PC-9 (cell line): ENCODE measurements at regions of chr5 and their contacts with region 1.

Region 1: DNA sequence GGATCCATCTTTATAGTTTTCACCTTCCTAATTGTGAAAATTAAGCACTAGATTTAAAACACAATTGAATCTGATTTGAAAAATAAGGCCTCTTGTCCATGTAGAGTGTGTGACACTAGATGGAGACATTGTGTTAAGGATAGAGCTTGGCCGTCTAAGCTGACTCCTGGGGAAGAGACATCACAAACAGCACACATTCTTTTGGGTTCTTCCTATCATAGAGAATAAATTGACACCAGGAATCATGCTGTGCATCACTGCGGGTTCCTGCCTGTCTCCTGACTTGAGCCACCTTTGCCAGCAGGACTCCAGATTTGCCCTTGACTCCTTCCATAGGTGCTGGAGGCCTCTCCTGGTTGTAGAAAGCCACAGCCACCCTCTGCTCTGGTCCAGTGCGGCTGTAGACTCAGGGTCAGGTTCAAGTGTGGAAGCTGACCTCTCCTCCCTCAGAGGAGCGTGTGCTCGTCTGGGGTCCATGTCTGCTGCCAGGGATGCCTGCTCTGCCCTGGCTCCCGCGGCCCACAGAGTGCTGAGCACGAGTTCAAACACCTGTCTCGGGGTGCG is 11.2 kb downstream of the ROPN1L start:
- DNase-seq: peak; percentile 62 to 77
- H3K4me3 ChIP-seq: no peak overlapping the region
- H3K27ac ChIP-seq: peak overlapping the region; percentile 72
- H3K4me1 ChIP-seq: peaks cover 43% of the 10 kb centered on the region
- H3K27me3 ChIP-seq: no peaks in the 10 kb centered on the region
- CTCF ChIP-seq: peak; percentile 95

Region 2: DNA sequence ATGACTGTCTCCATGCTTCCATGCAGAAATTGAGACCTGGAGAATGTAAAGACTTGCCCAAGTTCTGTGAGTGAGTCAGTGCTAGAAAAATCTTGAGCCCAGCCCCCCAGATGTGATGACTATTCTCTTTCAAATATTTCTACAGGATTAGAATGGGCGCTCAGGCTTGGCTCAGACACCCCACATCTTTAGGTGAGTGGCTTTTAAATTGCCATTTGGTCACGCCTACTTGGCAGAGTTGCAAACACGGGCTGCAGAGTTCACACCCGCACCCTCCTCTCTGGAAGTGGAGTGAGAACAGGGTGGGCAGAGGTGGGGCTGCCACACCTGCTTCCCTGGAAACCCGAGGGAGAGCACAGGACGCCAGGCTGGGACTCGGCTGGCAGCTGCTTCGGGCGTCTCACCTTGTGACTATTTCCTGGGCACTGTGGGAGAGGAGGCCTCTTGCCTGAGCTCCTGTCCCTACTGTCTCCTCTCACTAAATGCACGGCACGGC is 26.4 kb after region 1 on chr5:
- CTCF ChIA-PET with region 1: interaction called, 7 read pairs
- POLR2A ChIA-PET with region 1: interaction called, 9 read pairs
- intact Hi-C with region 1: loop called (anchors 1 kb)
- DNase-seq: peak; percentile 97 to 98
- H3K4me3 ChIP-seq: peak overlapping the region; percentile 12; the same call in 1 of the 2 replicates
- H3K27ac ChIP-seq: peak overlapping the region; percentile 79
- H3K4me1 ChIP-seq: peaks cover 50% of the 10 kb centered on the region
- H3K27me3 ChIP-seq: no peaks in the 10 kb centered on the region
- CTCF ChIP-seq: no peak

Region 3: GRCh38 chr5:10540036-10540544 is 87.2 kb after region 1 on chr5:
- CTCF ChIA-PET with region 1: interaction called, 16 read pairs
- POLR2A ChIA-PET with region 1: no interaction called
- intact Hi-C with region 1: no loop called
- DNase-seq: no peak
- H3K4me3 ChIP-seq: no peak overlapping the region
- H3K27ac ChIP-seq: no peak overlapping the region
- H3K4me1 ChIP-seq: no peaks in the 10 kb centered on the region
- H3K27me3 ChIP-seq: no peaks in the 10 kb centered on the region
- CTCF ChIP-seq: no peak

Region 4: GRCh38 chr5:10627160-10627701 is 174.4 kb after region 1 on chr5:
- CTCF ChIA-PET with region 1: interaction called, 69 read pairs
- POLR2A ChIA-PET with region 1: interaction called, 8 read pairs
- intact Hi-C with region 1: loop called (anchors 1 kb)
- DNase-seq: no peak
- H3K4me3 ChIP-seq: no peak overlapping the region
- H3K27ac ChIP-seq: peak overlapping the region; percentile 5; the same call in 1 of the 2 replicates
- H3K4me1 ChIP-seq: peaks cover 7% of the 10 kb centered on the region; the same call in 1 of the 2 replicates
- H3K27me3 ChIP-seq: no peaks in the 10 kb centered on the region
- CTCF ChIP-seq: no peak

Region 5: DNA sequence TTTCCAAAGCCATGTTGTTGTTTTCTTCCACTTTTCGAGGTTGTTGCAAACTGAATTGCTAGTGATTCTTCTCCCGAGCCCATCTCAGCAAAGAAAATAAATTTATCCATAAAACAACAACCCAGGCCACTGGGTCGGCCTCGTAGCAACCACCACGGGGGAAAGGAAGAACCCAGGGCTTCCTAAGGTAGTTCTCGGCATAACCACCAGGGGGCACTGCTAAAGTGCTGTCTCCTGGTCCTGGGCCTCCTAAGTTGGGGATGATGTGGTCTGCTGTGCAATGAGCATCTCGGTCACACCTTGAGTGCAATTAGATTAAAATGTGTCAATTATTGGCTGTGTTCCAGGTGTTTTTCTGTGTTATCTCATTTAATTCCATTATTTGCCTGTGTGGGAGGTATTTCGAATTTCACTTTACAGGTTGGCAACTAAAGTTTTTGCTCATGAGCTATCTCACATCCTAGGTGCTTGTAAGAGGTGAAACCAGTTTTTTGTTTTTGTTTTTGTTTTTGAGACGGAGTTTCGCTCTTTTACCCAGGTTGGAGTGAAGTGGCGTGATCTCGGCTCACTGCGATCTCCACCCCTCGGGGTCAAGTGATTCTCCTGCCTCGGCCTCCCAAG is 411.0 kb after region 1 on chr5:
- CTCF ChIA-PET with region 1: no interaction called
- POLR2A ChIA-PET with region 1: no interaction called
- intact Hi-C with region 1: loop called (anchors 5 kb)
- DNase-seq: peak in 1 of 2 experiments; percentile 62
- H3K4me3 ChIP-seq: no peak overlapping the region
- H3K27ac ChIP-seq: no peak overlapping the region
- H3K4me1 ChIP-seq: no peaks in the 10 kb centered on the region
- H3K27me3 ChIP-seq: no peaks in the 10 kb centered on the region
- CTCF ChIP-seq: peak; percentile 94

Region 6: DNA sequence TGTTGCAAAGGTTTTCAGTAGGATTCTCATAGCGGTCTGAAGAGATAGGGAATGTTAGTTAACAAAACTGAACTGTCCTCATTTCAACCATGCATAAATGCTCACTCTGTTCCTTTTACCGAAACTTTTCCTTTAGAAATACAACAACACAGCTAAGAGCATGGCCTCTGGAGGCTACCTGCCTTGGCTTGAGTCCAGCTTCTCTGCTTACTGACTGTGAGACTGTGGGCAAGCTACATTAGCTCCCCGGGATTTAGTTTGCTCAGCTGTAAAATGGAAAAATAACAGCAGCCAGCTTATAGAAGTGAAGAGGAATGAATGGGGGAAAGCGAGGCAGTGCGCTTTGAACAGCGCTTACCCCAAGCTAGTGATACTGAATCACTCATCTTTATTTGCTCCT is 816.0 kb after region 1 on chr5:
- CTCF ChIA-PET with region 1: no interaction called
- POLR2A ChIA-PET with region 1: no interaction called
- intact Hi-C with region 1: loop called (anchors 10 kb)
- DNase-seq: no peak
- H3K4me3 ChIP-seq: no peak overlapping the region
- H3K27ac ChIP-seq: no peak overlapping the region
- H3K4me1 ChIP-seq: no peaks in the 10 kb centered on the region
- H3K27me3 ChIP-seq: peaks cover 27% of the 10 kb centered on the region
- CTCF ChIP-seq: no peak

Region 7: GRCh38 chr5:11719888-11720481 is 1267.1 kb after region 1 on chr5:
- CTCF ChIA-PET with region 1: interaction called, 4 read pairs
- POLR2A ChIA-PET with region 1: no interaction called
- intact Hi-C with region 1: loop called (anchors 5 kb)
- DNase-seq: peak in 1 of 2 experiments; percentile 44
- H3K4me3 ChIP-seq: no peak overlapping the region
- H3K27ac ChIP-seq: no peak overlapping the region
- H3K4me1 ChIP-seq: no peaks in the 10 kb centered on the region
- H3K27me3 ChIP-seq: no peaks in the 10 kb centered on the region
- CTCF ChIP-seq: peak; percentile 57